ENCODE measurements at regions of chr3 and their contacts with region 1.

Region 1: DNA sequence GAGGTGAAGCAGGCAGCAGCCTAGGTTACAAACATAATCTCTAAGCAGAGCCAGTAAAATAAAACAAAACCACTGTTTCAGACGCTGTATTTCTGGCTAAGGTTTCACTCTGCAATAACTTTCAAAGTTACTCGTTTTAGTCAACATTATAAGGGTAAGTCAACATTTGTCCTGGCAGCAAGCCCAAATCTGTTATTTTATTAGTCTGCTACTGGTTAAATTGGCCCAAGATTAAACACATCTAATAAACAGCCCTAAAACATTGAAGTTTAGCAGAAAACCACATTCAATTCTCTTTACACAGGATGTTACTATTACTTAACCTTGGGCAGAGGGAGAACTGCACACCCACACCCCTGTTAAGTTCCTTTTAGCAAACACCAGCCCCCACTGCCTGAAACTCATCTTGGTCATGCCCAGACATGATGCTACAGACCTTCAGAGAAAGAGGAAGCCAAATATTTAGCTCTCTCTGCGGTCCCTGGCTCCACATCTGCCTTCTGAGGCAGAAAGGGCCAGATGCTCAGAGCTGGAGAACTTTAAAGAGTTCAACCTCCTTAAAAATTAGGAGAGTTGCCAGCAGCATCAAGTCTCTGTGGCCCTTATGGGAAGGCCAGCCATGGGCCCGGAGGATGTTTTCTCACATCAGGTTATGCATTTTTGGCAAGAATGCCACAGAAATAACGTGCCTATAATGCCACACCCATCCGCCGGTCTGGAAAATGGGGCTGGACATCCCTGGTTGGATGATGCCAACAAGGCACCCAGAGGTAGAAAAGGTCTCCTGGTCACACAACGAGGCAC is 17.9 kb downstream of the ARHGEF3 start:
- DNase-seq: peak; percentile 83
- CTCF ChIP-seq: no peak

Region 2: GRCh38 chr3:56702490-56703315 is 81.1 kb before region 1 on chr3:
- CTCF ChIA-PET with region 1: interaction called, 11 read pairs
- POLR2A ChIA-PET with region 1: no interaction called
- DNase-seq: peak; percentile 61
- CTCF ChIP-seq: peak; percentile 67

Region 3: GRCh38 chr3:56769116-56769707 is 14.6 kb before region 1 on chr3:
- CTCF ChIA-PET with region 1: interaction called, 13 read pairs
- POLR2A ChIA-PET with region 1: no interaction called
- DNase-seq: no peak
- CTCF ChIP-seq: no peak

Region 4: DNA sequence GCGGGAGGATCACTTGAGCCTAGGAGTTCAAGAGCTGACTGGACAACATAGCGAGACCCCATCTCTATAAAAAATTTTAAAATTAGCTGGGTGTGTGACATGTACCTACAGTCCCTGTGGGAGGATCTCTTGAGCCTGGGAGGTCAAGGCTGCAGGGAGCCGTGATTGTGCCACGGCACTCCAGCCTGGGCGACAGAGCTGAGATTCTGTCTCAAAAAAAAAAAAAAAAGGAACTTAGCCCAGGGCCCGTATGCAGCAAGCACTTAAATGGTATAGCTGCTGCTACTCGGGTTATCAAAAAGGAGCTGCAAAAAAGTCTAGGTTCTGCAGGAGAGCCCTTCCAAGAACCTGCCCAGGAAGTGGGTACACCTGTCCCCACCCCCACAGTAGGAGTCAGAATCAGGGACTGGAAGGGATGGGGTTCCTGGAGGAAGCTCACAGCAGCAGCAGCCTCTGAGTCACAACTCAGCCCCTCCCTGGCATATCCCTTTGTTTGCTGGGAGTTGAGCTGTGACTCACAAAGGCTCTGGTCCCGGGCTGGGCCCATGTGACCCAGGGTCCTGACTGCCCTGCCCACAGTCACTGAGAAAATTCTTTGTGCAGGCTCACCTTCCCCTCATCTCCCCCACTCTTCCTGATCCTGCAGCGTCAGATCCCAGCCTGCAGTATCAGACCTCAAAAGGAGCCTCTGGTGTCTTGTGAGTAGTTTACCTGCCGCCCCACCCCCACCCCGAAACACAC is 276.4 kb after region 1 on chr3 and contains the start of gene SPATA12:
- CTCF ChIA-PET with region 1: no interaction called
- POLR2A ChIA-PET with region 1: no interaction called
- DNase-seq: no peak
- CTCF ChIP-seq: no peak